HAP-1 (cell line): ENCODE measurements at regions of chr6 and their contacts with region 1.

Region 1: DNA sequence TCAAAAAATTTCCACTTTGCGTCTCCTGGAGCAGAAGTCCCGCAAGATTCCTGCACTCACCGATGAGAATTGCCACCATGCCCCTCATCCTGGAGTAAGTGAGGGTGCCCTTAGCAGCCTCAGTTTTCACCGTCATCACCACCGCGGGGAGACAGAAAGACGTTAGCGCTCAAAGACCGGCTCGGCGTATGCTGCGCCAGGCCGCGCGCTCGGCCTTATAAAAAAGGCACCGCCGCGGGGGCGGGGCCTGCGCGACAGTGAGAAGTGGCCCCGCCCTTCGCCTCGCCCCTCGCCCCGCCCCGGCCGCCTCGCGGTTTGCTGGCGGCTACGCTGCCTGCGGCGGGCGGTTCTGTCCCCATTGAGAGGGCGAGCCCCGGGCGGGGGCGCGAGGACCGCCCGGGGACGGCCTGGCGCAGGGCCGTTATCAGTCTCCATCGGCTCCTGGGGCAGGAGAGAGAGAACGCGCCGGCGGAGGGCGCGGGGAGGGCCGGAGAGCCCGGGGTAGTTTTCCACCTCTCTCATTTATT is 122.3 kb upstream of the SLC2A12 start:
- DNase-seq: peak; percentile 77 to 94
- H3K4me3 ChIP-seq: peak overlapping the region; percentile 59
- H3K4me1 ChIP-seq: peaks cover 10% of the 10 kb centered on the region; the same call in 1 of the 2 replicates
- H3K27me3 ChIP-seq: no peaks in the 10 kb centered on the region

Region 2: GRCh38 chr6:134436281-134436815 is 261.6 kb after region 1 on chr6:
- in situ Hi-C with region 1: no loop called
- DNase-seq: peak; percentile 38 to 64
- H3K4me3 ChIP-seq: no peak overlapping the region
- H3K4me1 ChIP-seq: peaks cover 5% of the 10 kb centered on the region
- H3K27me3 ChIP-seq: no peaks in the 10 kb centered on the region

Region 3: GRCh38 chr6:134640975-134641429 is 466.3 kb after region 1 on chr6:
- in situ Hi-C with region 1: loop called (anchors 5 kb)
- DNase-seq: peak; percentile 63 to 78
- H3K4me3 ChIP-seq: no peak overlapping the region
- H3K4me1 ChIP-seq: no peaks in the 10 kb centered on the region
- H3K27me3 ChIP-seq: no peaks in the 10 kb centered on the region

Region 4: DNA sequence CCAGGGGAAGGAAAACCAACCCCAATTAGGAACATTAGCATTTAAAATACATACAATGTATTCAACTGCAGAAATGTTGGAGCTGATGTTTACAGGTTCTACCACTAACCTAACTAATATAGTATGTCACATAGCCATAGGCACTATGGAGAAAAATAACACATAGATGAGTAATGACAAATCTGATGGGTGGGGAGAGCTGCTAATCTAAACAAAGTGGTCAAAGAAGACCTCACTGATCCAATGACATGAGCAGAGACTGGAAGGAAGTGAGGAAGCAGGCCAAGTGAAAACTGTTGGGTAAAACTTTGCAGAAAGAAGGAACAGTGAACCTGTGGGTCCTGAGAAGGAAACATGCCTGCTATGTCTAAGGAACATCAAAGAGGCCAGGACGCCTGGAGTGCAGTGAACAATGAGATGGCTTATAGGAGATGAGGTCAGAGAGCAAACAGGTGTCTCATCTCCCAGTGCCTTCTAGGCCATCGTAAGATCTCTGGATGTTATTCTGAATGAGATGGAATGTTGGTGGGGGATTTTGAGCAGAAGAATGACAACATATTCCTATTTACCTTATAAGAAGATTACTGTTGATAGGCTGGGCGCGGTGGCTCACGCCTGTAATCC is 639.5 kb after region 1 on chr6:
- in situ Hi-C with region 1: loop called (anchors 10 kb)
- DNase-seq: no peak
- H3K4me3 ChIP-seq: no peak overlapping the region
- H3K4me1 ChIP-seq: no peaks in the 10 kb centered on the region
- H3K27me3 ChIP-seq: no peaks in the 10 kb centered on the region

Region 5: GRCh38 chr6:134882426-134883038 is 707.8 kb after region 1 on chr6:
- in situ Hi-C with region 1: loop called (anchors 25 kb)
- DNase-seq: peak; percentile 51 to 72
- H3K4me3 ChIP-seq: no peak overlapping the region
- H3K4me1 ChIP-seq: no peaks in the 10 kb centered on the region
- H3K27me3 ChIP-seq: peaks cover 7% of the 10 kb centered on the region; the same call in 1 of the 2 replicates